PC-3 (cell line): ENCODE measurements at regions of chr13 and their contacts with region 1.

Region 1: DNA sequence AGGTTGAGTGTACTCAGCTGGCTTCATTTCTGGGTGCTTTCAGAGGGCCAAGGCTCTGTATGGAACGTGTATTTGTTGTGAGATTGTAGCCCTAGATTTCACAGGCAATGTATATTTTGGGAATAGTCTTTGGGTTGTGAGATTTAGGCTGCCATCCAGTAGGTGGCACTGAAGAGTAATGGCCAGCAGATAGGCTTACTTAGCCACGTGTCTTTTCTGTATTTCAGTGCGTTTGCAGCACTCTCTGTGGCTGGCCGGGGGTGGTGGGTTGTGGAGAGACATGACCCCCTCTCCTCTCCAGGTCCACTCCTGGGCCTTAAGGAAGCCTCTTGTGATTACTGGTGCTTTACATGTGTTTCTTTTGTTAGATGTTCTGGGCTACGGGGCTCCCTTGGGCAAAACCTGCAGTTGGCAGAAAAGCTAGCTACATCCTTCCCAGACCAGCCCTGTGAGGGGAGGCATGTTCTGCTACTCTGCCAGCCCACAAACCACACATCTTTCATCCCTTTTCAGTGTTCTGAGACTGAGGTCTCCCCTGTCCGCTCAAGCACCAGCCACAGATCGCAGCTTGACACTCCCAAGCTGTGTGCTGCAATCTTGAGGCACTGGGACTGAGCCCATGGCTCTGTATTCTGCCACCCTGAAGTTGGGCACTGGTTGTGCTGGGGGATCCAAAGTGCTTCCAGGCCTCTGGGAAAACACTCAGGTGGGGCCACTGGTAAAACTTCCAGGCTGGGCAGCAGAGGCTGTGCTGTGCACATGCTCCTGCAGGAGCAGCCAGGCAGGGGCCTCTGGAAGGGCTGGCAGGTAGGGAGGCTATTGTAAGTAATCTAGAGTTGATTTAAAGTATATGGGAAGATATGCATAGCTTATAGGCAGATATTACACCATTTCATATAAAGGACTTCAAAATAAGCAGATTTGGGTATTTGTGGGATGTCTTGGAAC is 1096.8 kb upstream of the PCDH20 start:
- DNase-seq: peak; percentile 58
- ATAC-seq: peak; percentile 88
- H3K4me3 ChIP-seq: no peak overlapping the region
- H3K27ac ChIP-seq: no peak overlapping the region
- H3K4me1 ChIP-seq: no peaks in the 10 kb centered on the region
- H3K27me3 ChIP-seq: no peaks in the 10 kb centered on the region
- CTCF ChIP-seq: peak; percentile 72

Region 2: GRCh38 chr13:62489731-62490130 is 22.7 kb before region 1 on chr13:
- CTCF ChIA-PET with region 1: no interaction called
- POLR2A ChIA-PET with region 1: no interaction called
- intact Hi-C with region 1: no loop called
- DNase-seq: no peak
- ATAC-seq: no peak
- H3K4me3 ChIP-seq: no peak overlapping the region
- H3K27ac ChIP-seq: no peak overlapping the region
- H3K4me1 ChIP-seq: no peaks in the 10 kb centered on the region
- H3K27me3 ChIP-seq: no peaks in the 10 kb centered on the region
- CTCF ChIP-seq: no peak

Region 3: GRCh38 chr13:62846302-62846701 is 333.8 kb after region 1 on chr13:
- CTCF ChIA-PET with region 1: no interaction called
- POLR2A ChIA-PET with region 1: no interaction called
- intact Hi-C with region 1: loop called (anchors 10 kb)
- DNase-seq: peak; percentile 52
- ATAC-seq: peak; percentile 93
- H3K4me3 ChIP-seq: no peak overlapping the region
- H3K27ac ChIP-seq: 0 out of 2 replicates have a peak overlapping the region, but pooled peaks have one; percentile 19
- H3K4me1 ChIP-seq: peaks cover 11% of the 10 kb centered on the region
- H3K27me3 ChIP-seq: no peaks in the 10 kb centered on the region
- CTCF ChIP-seq: no peak